ENCODE measurements at regions of chr2 and their contacts with region 1.

Region 1: GRCh38 chr2:225122583-225123486 is 80.6 kb upstream of the DOCK10 start:
- DNase-seq: peak; percentile 60
- H3K4me3 Mint-ChIP-seq: no peak overlapping the region
- H3K27ac Mint-ChIP-seq: no peak overlapping the region
- H3K4me1 Mint-ChIP-seq: no peaks in the 10 kb centered on the region
- H3K27me3 Mint-ChIP-seq: no peaks in the 10 kb centered on the region

Region 2: DNA sequence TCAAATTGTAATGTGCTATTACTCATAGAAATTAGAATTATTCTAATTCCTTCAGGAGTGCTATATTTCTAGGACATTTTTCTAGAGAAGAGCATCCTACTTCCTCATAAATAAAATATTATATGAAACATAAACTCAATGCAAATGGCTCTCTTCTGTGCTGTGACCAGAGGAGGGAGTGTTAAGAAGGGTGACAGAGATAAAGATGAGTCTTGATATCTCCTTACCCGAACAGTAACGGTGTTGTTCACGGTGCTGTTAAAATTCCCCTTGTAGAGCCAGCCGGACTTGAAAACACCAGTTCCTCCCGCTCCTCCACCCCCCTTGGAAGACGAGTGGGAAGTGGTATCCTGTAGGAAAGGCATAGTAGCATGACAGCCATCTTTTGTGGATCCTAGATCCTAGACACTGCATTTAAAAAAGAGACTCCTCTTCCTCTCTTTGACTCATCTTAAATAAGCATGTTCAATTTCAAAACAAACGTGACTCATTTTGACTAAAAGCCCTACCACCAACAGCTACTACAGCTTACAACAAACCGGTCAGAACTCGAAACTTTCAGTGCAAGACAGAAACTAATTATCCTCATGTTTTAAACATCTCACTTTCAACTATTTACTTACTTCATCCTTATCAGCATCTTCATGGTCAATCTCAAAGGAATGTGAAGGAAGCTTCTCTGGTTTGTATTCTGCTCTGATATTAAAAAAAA is 236.8 kb before region 1 on chr2:
- CTCF ChIA-PET with region 1: no interaction called
- intact Hi-C with region 1: loop called (anchors 5 kb)
- DNase-seq: no peak
- H3K4me3 Mint-ChIP-seq: no peak overlapping the region
- H3K27ac Mint-ChIP-seq: peak overlapping the region; percentile 81
- H3K4me1 Mint-ChIP-seq: peaks cover 71% of the 10 kb centered on the region
- H3K27me3 Mint-ChIP-seq: no peaks in the 10 kb centered on the region

Region 3: DNA sequence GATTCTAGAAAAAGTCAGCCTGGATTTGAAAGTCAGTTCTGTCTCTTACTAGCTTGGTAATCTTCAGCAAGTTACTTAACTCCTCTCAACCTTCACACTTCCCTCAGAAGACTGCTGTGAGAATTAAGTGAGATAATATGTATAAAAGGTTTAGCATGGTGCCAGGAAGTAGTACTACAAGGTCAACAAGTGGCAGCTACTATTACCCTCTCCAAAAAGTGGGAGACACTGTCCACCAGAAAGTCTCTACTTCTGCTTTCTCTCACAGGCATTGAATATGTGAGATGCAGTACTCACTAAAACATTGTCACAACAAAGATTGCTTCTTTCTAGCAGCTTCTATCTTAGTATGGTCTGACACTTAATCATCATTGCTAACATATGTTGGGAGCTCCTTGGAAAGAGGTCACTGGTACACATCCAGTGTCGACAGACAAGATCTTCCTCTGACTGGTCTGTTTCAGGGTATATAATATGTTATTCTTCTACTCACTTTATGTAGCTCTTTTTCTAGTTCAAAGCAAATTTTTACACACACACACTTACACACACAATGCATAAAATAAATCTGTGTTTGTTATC is 128.5 kb before region 1 on chr2:
- CTCF ChIA-PET with region 1: no interaction called
- intact Hi-C with region 1: no loop called
- DNase-seq: no peak
- H3K4me3 Mint-ChIP-seq: no peak overlapping the region
- H3K27ac Mint-ChIP-seq: no peak overlapping the region
- H3K4me1 Mint-ChIP-seq: peaks cover 70% of the 10 kb centered on the region
- H3K27me3 Mint-ChIP-seq: no peaks in the 10 kb centered on the region

Region 4: DNA sequence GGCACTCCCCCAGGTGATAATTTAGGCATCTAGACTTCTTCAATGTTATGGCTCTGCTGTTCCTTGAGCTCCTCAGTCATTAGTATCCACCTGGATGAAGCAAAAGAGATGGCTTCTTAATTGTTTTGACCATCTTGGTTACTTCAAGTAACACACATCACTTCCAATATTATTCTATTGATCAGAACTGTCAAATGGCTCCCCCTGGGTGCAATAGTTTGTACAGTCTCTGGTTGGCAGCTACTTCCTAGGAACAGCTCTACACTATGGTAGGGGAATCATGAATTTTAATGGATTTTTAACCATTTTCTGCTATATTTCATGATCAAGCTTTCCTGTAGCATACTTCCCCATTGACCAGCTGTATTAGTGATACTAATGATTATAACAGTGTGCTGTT is 433.6 kb after region 1 on chr2:
- CTCF ChIA-PET with region 1: interaction called, 3 read pairs
- intact Hi-C with region 1: loop called (anchors 5 kb)
- DNase-seq: no peak
- H3K4me3 Mint-ChIP-seq: no peak overlapping the region
- H3K27ac Mint-ChIP-seq: no peak overlapping the region
- H3K4me1 Mint-ChIP-seq: no peaks in the 10 kb centered on the region
- H3K27me3 Mint-ChIP-seq: peaks cover 14% of the 10 kb centered on the region